GM12878 (cell line): ENCODE measurements at regions of chr4 and their contacts with region 1.

Region 1: DNA sequence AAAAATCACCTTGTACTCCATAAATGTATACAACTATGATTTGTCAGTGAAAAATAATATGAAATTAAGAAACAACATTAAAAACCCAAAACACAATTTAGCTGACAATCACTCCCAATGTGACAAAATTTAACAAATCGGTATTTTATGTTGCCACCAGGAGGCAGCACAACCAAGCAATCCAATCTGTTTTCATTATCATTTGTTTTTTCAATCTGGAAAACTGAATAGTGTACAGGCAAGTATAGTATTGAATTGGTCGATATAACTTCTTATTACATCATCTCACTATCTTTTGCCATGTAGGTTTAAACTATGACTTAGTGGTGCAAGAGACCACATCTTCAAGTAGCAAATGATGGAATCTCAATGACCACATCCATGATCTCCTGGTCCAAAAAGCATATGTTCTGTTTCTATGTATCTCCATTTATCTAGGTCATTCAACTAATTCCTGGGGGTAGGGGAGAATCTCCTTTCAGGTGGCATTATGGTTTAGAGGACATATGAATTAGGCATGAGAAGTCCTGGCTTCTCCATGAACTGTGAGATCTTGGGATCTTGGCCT is 112.9 kb upstream of the AGA start:
- DNase-seq: no peak
- ATAC-seq: 0 out of 3 replicates have a peak, but pooled peaks have one; percentile 40
- H3K4me3 ChIP-seq: no peak overlapping the region
- H3K27ac ChIP-seq: no peak overlapping the region
- H3K4me1 ChIP-seq: no peaks in the 10 kb centered on the region
- H3K27me3 ChIP-seq: no peaks in the 10 kb centered on the region
- CTCF ChIP-seq: peak; percentile 41 to 68 (median 62); a peak in 5 of 6 replicates
- EP300 ChIP-seq: no peak
- POLR2A ChIP-seq: no peak
- RAD21 ChIP-seq: peak; percentile 83

Region 2: GRCh38 chr4:177250056-177250696 is 304.9 kb before region 1 on chr4:
- CTCF ChIA-PET with region 1: interaction called, 6 read pairs
- POLR2A ChIA-PET with region 1: no interaction called
- RAD21 ChIA-PET with region 1: interaction called, 5 read pairs
- SMC1A ChIA-PET with region 1: no interaction called
- in situ Hi-C with region 1: no loop called
- intact Hi-C with region 1: loop called (anchors 10 kb)
- DNase-seq: no peak
- ATAC-seq: peak; percentile 96
- H3K4me3 ChIP-seq: no peak overlapping the region
- H3K27ac ChIP-seq: no peak overlapping the region
- H3K4me1 ChIP-seq: no peaks in the 10 kb centered on the region
- H3K27me3 ChIP-seq: no peaks in the 10 kb centered on the region; a peak in 1 of 4 replicates
- CTCF ChIP-seq: peak; percentile 90 to 92 (median 90)
- EP300 ChIP-seq: no peak
- POLR2A ChIP-seq: no peak
- RAD21 ChIP-seq: peak; percentile 95

Region 3: DNA sequence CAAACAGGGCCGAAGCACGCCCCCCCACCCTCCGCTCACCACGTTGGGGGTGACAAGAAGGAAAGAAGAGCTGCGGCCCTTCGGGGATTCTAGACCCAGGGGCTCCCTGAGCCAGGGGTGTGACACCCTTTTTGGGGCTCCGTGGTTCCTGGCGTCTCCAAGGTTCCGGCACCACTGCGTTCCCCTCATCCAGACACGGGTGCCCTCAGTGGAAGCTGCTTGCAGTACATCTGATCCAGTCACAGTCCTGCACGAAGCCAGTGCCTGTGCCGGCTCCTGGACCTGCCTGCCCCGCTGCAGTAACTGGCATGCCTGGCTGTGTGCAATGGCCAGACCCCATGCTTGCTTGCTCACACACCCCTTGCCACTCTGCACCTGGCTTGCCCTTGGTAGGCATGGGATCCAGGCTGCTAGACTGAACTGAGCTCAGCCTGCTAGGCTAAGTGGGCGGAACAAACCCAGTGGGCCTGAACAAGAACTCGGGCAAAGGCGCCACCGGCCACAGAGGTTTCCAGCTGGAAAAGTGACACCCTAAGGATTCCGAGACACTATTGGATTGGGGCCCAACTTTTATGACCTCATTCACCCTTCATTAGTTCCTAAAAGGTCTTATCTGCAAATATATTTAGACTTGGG is 307.6 kb after region 1 on chr4:
- CTCF ChIA-PET with region 1: no interaction called
- POLR2A ChIA-PET with region 1: no interaction called
- RAD21 ChIA-PET with region 1: no interaction called
- SMC1A ChIA-PET with region 1: no interaction called
- in situ Hi-C with region 1: no loop called
- intact Hi-C with region 1: no loop called
- DNase-seq: no peak
- ATAC-seq: no peak
- H3K4me3 ChIP-seq: no peak overlapping the region
- H3K27ac ChIP-seq: no peak overlapping the region
- H3K4me1 ChIP-seq: no peaks in the 10 kb centered on the region
- H3K27me3 ChIP-seq: no peaks in the 10 kb centered on the region
- CTCF ChIP-seq: no peak
- EP300 ChIP-seq: no peak
- POLR2A ChIP-seq: no peak
- RAD21 ChIP-seq: no peak

Region 4: DNA sequence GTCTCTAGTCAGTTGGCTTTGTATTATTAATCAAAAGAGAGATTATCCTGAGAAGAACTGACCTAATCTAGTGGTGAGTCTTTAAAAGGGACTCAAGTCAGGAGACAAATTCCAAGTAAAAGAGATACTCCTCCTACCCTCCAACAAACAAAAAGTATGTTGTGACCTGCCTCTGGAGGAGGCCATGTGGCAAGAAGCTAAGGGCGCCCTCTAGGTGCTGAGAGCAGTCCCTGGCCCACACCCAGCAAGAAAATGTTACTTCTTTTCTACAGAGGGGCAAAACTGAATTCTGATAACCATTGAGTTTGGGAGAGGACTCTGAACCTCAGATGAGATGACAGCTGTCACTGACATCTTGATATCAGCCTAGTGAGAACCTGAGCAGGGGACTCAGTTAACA is 840.7 kb after region 1 on chr4:
- CTCF ChIA-PET with region 1: no interaction called
- POLR2A ChIA-PET with region 1: no interaction called
- RAD21 ChIA-PET with region 1: no interaction called
- SMC1A ChIA-PET with region 1: no interaction called
- in situ Hi-C with region 1: no loop called
- intact Hi-C with region 1: loop called (anchors 5 kb)
- DNase-seq: no peak
- ATAC-seq: peak; percentile 51; the same call in 2 of the 3 replicates
- H3K4me3 ChIP-seq: no peak overlapping the region
- H3K27ac ChIP-seq: no peak overlapping the region
- H3K4me1 ChIP-seq: no peaks in the 10 kb centered on the region
- H3K27me3 ChIP-seq: no peaks in the 10 kb centered on the region
- CTCF ChIP-seq: peak in 2 of 3 experiments; percentile 19 to 32; a peak in 2 of 6 replicates
- EP300 ChIP-seq: no peak
- POLR2A ChIP-seq: no peak
- RAD21 ChIP-seq: no peak